Calu3 (cell line): ENCODE measurements at regions of chr17 and their contacts with region 1.

Region 1: GRCh38 chr17:40113110-40113906 is 8.5 kb upstream of the MSL1 start:
- DNase-seq: peak; percentile 100
- H3K4me3 Mint-ChIP-seq: peak overlapping the region; percentile 65
- H3K27ac Mint-ChIP-seq: peak overlapping the region; percentile 74
- H3K4me1 Mint-ChIP-seq: peaks cover 58% of the 10 kb centered on the region
- H3K27me3 Mint-ChIP-seq: no peaks in the 10 kb centered on the region
- CTCF ChIP-seq: no peak

Region 2: GRCh38 chr17:39738931-39739884 is 374.1 kb before region 1 on chr17:
- CTCF ChIA-PET with region 1: interaction called, 11 read pairs
- intact Hi-C with region 1: no loop called
- DNase-seq: peak; percentile 100
- H3K4me3 Mint-ChIP-seq: peak overlapping the region; percentile 77
- H3K27ac Mint-ChIP-seq: peak overlapping the region; percentile 21
- H3K4me1 Mint-ChIP-seq: peaks cover 54% of the 10 kb centered on the region
- H3K27me3 Mint-ChIP-seq: no peaks in the 10 kb centered on the region
- CTCF ChIP-seq: no peak

Region 3: DNA sequence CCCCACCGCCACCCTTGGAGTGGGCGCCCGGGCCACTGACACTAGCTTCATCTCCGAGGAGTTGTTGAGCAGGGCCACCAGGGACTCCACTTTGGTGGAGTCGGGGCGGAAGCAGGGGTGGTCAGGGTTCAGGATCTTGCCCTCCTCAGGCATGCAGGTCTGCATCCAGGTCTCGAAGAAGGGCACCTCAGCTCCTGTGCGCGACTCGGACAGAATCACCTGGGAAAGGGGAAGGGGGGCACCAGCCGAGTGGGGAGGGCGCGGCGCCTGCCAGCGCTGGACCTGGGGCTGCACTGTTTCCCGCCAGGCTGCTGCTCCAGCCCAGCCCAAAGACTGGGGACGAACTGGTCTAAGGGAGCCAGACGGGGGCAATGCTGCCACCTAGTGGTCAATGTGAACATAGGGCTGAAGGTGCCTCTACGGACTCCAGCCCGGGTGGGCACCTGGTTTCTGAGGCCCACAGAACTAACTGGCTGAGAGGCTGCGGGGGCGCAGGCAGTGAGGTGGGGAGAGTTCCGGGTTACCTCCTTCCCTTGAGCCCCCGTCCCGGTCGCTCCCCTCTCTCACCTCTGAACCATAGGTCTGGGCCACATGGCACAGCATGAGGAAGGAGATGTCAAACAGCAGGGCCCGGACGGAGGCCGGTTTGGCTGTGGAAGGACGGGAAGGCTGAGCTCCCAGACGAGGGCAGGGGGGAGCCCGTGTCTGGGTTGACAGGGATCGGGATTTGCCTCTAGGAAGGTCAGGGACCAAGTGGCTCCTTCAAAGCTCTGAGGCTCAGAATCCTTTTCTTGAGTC is 86.3 kb before region 1 on chr17:
- CTCF ChIA-PET with region 1: interaction called, 83 read pairs
- intact Hi-C with region 1: loop called (anchors 1 kb)
- DNase-seq: peak; percentile 100
- H3K4me3 Mint-ChIP-seq: no peak overlapping the region
- H3K27ac Mint-ChIP-seq: no peak overlapping the region
- H3K4me1 Mint-ChIP-seq: peaks cover 30% of the 10 kb centered on the region
- H3K27me3 Mint-ChIP-seq: no peaks in the 10 kb centered on the region
- CTCF ChIP-seq: no peak

Region 4: GRCh38 chr17:40091691-40092397 is 21.5 kb before region 1 on chr17:
- CTCF ChIA-PET with region 1: interaction called, 674 read pairs
- intact Hi-C with region 1: no loop called
- DNase-seq: no peak
- H3K4me3 Mint-ChIP-seq: no peak overlapping the region
- H3K27ac Mint-ChIP-seq: no peak overlapping the region
- H3K4me1 Mint-ChIP-seq: peaks cover 3% of the 10 kb centered on the region
- H3K27me3 Mint-ChIP-seq: no peaks in the 10 kb centered on the region
- CTCF ChIP-seq: no peak

Region 5: DNA sequence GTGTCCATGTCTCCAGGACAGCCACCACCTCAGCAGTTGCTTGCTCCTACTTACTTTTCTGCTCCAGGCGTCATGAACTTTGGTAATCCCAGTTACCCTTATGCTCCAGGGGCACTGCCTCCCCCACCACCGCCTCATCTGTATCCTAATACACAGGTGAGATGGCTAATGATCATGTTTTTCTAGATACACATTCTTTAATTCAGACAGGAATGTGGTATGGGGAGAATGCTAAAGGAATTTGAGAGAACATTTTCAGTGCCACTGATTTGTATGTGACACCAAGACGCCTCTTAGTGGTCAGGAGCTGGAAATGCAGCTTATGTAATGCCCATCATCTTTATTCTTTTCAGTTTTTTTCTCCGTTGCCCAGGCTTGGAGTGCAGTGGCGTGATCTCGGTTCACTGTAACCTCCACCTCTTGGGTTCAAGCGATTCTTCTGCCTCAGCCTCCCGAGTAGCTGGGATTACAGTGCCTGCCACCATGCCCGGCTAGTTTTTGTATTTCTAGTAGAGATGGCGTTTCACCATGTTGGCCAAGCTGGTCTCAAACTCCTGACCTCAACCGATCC is 55.0 kb after region 1 on chr17:
- CTCF ChIA-PET with region 1: interaction called, 462 read pairs
- intact Hi-C with region 1: loop called (anchors 1 kb)
- DNase-seq: peak; percentile 88
- H3K4me3 Mint-ChIP-seq: no peak overlapping the region
- H3K27ac Mint-ChIP-seq: peak overlapping the region; percentile 4
- H3K4me1 Mint-ChIP-seq: peaks cover 17% of the 10 kb centered on the region
- H3K27me3 Mint-ChIP-seq: no peaks in the 10 kb centered on the region
- CTCF ChIP-seq: no peak

Region 6: DNA sequence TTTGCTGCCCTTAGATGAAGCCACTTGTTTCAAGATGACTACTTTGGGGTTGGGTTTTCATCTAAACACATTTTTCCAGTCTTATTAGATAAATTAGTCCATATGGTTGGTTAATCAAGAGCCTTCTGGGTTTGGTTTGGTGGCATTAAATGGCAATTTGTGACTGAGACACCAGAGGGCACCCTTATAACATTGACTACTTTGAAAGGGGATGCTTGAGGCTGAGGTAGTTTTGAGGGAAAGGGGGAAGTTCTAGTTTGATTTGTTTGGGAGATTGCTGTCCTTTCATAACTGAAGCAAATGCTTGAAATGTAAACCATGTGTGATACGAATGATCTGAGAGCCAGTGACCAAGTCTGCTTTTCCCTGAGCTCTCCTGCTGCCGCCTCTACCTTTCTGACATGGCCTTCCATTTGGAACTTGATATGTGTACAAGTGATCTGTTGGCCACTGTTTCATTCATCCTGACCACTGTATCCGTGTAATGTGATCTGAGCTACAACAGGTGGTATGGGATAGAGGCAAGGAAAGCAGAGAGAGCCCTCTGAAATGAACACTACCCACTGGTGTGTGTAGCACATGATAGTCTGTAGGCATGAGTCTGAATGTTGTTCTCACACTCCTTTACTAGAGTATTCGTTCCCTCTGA is 189.8 kb after region 1 on chr17:
- CTCF ChIA-PET with region 1: interaction called, 10 read pairs
- intact Hi-C with region 1: no loop called
- DNase-seq: peak; percentile 94
- H3K4me3 Mint-ChIP-seq: no peak overlapping the region
- H3K27ac Mint-ChIP-seq: peak overlapping the region; percentile 26
- H3K4me1 Mint-ChIP-seq: peaks cover 34% of the 10 kb centered on the region
- H3K27me3 Mint-ChIP-seq: no peaks in the 10 kb centered on the region
- CTCF ChIP-seq: peak; percentile 99

Region 7: DNA sequence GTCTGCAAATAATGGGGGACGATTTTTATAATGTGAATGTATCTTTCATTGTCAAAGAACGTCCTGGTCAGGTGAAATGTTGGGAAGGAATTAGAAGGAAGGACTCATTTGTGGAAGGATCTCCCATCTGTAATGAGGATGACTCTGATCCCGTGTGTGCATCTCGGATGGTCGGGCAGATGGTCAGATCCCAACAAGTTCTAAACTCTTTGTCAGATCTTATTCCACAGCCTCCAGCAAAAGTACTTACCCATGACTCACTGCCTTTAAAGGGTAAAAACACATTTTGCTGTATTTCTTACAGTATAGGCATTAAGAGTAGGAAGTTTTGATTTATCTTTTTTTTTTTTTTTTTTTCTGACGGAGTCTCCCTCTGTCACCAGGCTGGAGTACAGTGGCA is 985.2 kb after region 1 on chr17:
- CTCF ChIA-PET with region 1: no interaction called
- intact Hi-C with region 1: no loop called
- DNase-seq: no peak
- H3K4me3 Mint-ChIP-seq: no peak overlapping the region
- H3K27ac Mint-ChIP-seq: no peak overlapping the region
- H3K4me1 Mint-ChIP-seq: peaks cover 54% of the 10 kb centered on the region
- H3K27me3 Mint-ChIP-seq: no peaks in the 10 kb centered on the region
- CTCF ChIP-seq: no peak